Heart right ventricle (tissue), 16 donors: ENCODE measurements at regions of chr1 and their contacts with region 1.

Region 1: GRCh38 chr1:172443626-172444453 is at the start of gene PIGC:
- DNase-seq: peak; percentile 90 to 92
- ATAC-seq: peak; percentile 99 to 100 (median 99)
- H3K4me3 ChIP-seq: peak within 1 kb of the TSS; percentile 76 to 99 (median 96)
- H3K27ac ChIP-seq: peak within 1 kb of the TSS in 9 of 10 donors; percentile 79 to 96 (median 83)
- H3K4me1 ChIP-seq: peaks cover 3 to 25% (median 12%) of the 10 kb centered on the region in 9 donors
- H3K27me3 ChIP-seq: no peaks in the 10 kb centered on the region
- CTCF ChIP-seq: peak; percentile 78 to 97 (median 87)
- total RNA-seq, gene PIGC: 9.3 to 14.5 (median 13.0) TPM

Region 2: DNA sequence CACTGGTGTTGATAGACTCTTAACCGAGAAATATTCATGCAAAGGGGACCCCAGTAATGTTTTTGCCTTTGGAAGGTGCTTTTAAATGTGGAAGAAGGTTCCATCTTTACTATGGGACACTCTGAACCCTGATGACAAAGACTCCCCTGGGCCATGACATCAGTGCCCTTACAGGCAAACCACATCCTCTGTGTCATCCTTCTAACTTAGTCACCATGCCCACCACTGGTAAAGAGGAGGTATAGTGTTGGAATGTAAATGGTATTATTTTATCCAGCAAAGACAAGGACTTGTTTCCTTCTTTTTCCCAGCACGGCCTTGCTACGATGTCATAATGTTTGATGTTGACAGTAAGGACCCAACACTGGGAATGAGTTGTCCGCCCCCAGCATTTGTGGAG is 649.8 kb before region 1 on chr1:
- intact Hi-C with region 1: loop called in 1 of 10 experiments (anchors 10 kb)
- DNase-seq: no peak
- ATAC-seq: no peak
- H3K4me3 ChIP-seq: no peak overlapping the region
- H3K27ac ChIP-seq: no peak overlapping the region
- H3K4me1 ChIP-seq: peaks cover 0 to 12% (median 0%) of the 10 kb centered on the region in 9 donors
- H3K27me3 ChIP-seq: no peaks in the 10 kb centered on the region
- CTCF ChIP-seq: no peak

Region 3: DNA sequence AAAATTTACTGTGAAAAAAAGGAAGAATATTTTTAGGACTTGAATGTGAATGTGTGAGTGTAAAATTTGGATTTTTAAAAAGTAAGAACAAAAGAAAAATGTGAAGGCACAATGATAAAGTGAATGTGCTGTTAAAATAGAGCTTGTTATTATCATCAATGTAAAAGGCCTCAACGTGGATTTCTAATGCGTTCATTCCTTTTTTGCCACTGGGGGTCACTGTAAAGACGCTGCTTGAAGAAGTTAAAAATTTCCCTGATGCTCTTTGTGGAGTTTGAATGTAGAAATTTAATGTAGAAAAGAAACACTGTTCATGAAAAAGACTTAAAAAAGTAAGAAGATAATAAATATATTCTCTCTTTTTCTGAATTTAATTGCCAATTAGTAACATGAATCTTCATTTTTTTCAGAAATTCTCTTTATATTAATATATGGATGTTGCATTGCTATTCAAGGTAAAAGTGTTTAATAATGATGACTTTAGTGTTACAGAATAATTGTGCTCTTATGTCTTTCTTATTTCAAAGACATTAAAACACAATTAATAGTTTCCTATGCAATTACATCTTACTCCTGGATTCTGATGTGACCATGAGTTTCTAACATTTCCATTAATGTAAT is 441.0 kb before region 1 on chr1:
- intact Hi-C with region 1: loop called in 4 of 10 experiments (anchors 5 to 10 kb)
- DNase-seq: peak in 1 of 2 donors; percentile 9
- ATAC-seq: no peak
- H3K4me3 ChIP-seq: no peak overlapping the region
- H3K27ac ChIP-seq: no peak overlapping the region
- H3K4me1 ChIP-seq: peaks cover 0 to 10% (median 0%) of the 10 kb centered on the region in 9 donors
- H3K27me3 ChIP-seq: no peaks in the 10 kb centered on the region
- CTCF ChIP-seq: peak; percentile 25 to 81 (median 68)

Region 4: DNA sequence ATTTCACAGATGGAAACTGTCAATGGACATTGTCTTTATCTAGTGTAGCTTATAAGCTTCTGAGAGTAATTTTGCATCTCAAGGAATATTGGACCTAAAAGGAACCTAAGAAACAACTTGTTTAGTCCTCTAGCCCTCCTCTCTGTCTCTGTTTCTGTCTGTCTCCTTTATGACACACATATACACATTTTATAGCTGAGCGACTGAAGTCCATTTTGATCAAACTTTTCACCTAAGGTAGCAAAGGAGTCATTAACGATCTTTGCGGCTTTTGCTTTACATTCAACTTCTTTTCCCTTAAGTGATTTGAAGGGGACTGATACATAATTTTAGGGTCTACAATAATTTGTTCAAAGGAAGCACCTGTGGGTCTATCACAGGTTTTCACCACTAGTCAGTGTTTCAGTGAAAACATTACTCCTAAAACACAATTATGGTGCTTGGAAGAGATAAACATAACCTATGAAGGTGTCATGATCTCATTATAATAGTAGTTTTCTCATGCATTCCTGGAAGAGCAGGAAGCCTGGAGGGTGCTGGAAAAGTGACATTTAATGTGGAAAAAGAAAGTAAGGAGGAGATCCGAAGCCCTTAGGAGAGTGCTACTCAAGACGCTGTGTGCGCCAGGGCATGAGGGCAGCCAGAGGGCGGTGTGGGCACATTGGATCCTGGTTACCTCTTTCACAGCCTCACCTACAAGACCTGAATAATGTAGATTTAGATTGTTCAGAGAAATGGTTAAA is 353.9 kb before region 1 on chr1:
- intact Hi-C with region 1: loop called in 1 of 10 experiments (anchors 5 kb)
- DNase-seq: peak; percentile 28 to 41
- ATAC-seq: peak in 7 of 8 donors; percentile 55 to 84 (median 73)
- H3K4me3 ChIP-seq: no peak overlapping the region
- H3K27ac ChIP-seq: no peak overlapping the region
- H3K4me1 ChIP-seq: no peaks in the 10 kb centered on the region
- H3K27me3 ChIP-seq: no peaks in the 10 kb centered on the region
- CTCF ChIP-seq: peak; percentile 31 to 81 (median 71)

Region 5: DNA sequence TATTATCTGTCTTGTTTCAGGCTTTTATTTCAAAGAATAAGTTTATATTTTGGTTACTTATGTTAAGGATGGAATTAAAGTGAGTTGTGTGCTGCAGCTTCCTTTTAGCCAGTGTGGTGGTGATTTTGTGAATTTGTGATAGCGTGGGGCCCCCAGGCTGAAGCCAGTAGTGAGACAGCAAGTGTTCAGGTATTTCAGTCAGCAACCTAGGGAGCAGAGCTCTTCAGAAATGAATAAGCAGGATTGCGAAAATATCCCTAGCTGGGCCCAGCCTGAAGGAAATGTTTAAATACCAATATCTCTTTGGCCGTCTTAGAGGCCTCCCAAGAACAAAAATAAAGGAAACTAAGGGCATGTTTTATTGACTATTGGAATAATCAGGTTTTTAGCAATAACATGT is 174.2 kb before region 1 on chr1:
- intact Hi-C with region 1: no loop called
- DNase-seq: no peak
- ATAC-seq: peak in 1 of 8 donors; percentile 35
- H3K4me3 ChIP-seq: no peak overlapping the region
- H3K27ac ChIP-seq: no peak overlapping the region
- H3K4me1 ChIP-seq: peaks cover 0 to 12% (median 0%) of the 10 kb centered on the region in 9 donors
- H3K27me3 ChIP-seq: no peaks in the 10 kb centered on the region
- CTCF ChIP-seq: no peak